ENCODE measurements at regions of chr9 and their contacts with region 1.

Region 1: DNA sequence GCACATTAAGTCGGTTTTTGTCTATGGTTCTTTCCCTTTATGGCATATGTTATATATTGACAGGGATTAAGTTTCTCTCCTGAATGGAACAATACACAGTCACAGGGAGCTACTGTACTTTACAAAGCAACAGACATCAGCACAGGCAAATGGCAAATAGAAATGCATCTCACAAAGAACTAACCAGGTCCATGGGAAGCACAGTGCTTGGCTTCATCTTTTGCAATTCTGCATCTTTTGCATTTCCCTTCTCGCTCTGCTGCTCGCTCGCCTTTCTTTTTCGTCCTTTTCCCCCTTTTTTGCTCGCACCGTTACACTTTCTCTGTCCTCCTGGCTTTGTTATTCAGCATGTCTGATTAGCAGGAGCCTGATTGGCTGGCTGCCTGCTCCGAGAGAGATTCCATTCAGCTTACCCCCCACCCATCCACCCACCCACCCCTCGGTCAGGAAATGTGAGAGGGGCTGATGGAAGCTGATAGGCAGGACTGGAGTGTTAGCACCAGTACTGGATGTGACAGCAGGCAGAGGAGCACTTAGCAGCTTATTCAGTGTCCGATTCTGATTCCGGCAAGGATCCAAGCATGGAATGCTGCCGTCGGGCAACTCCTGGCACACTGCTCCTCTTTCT is at the start of gene ADAMTSL1:
- DNase-seq: no peak
- ATAC-seq: no peak
- H3K4me3 ChIP-seq: no peak within 1 kb of the TSS
- H3K4me3 Mint-ChIP-seq: no peak within 1 kb of the TSS
- H3K27ac ChIP-seq: no peak within 1 kb of the TSS
- H3K27ac Mint-ChIP-seq: no peak within 1 kb of the TSS
- H3K4me1 ChIP-seq: no peaks in the 10 kb centered on the region
- H3K4me1 Mint-ChIP-seq: no peaks in the 10 kb centered on the region
- H3K27me3 ChIP-seq: peaks cover 0 to 5% of the 10 kb centered on the region in 2 experiments
- H3K27me3 Mint-ChIP-seq: peaks cover 30% of the 10 kb centered on the region
- CTCF ChIP-seq: no peak
- total RNA-seq, gene ADAMTSL1: not detected

Region 2: GRCh38 chr9:18531136-18532065 is 57.6 kb after region 1 on chr9:
- CTCF ChIA-PET with region 1: no interaction called
- POLR2A ChIA-PET with region 1: no interaction called
- intact Hi-C with region 1: loop called in 1 of 2 experiments (anchors 10 kb)
- DNase-seq: no peak
- ATAC-seq: no peak
- H3K4me3 ChIP-seq: no peak overlapping the region
- H3K4me3 Mint-ChIP-seq: no peak overlapping the region
- H3K27ac ChIP-seq: no peak overlapping the region
- H3K27ac Mint-ChIP-seq: no peak overlapping the region
- H3K4me1 ChIP-seq: no peaks in the 10 kb centered on the region
- H3K4me1 Mint-ChIP-seq: no peaks in the 10 kb centered on the region
- H3K27me3 ChIP-seq: no peaks in the 10 kb centered on the region
- H3K27me3 Mint-ChIP-seq: no peaks in the 10 kb centered on the region
- CTCF ChIP-seq: no peak